PC-3 (cell line): ENCODE measurements at regions of chr2 and their contacts with region 1.

Region 1: GRCh38 chr2:97663965-97664635 is at the start of gene ACTR1B:
- DNase-seq: peak; percentile 98
- ATAC-seq: peak; percentile 82
- H3K4me3 ChIP-seq: peak within 1 kb of the TSS; percentile 83
- H3K27ac ChIP-seq: peak within 1 kb of the TSS; percentile 77
- H3K4me1 ChIP-seq: peaks cover 24% of the 10 kb centered on the region
- H3K27me3 ChIP-seq: no peaks in the 10 kb centered on the region
- CTCF ChIP-seq: peak; percentile 71
- total RNA-seq, gene ACTR1B: 27.0 and 31.1 TPM in 2 replicates

Region 2: DNA sequence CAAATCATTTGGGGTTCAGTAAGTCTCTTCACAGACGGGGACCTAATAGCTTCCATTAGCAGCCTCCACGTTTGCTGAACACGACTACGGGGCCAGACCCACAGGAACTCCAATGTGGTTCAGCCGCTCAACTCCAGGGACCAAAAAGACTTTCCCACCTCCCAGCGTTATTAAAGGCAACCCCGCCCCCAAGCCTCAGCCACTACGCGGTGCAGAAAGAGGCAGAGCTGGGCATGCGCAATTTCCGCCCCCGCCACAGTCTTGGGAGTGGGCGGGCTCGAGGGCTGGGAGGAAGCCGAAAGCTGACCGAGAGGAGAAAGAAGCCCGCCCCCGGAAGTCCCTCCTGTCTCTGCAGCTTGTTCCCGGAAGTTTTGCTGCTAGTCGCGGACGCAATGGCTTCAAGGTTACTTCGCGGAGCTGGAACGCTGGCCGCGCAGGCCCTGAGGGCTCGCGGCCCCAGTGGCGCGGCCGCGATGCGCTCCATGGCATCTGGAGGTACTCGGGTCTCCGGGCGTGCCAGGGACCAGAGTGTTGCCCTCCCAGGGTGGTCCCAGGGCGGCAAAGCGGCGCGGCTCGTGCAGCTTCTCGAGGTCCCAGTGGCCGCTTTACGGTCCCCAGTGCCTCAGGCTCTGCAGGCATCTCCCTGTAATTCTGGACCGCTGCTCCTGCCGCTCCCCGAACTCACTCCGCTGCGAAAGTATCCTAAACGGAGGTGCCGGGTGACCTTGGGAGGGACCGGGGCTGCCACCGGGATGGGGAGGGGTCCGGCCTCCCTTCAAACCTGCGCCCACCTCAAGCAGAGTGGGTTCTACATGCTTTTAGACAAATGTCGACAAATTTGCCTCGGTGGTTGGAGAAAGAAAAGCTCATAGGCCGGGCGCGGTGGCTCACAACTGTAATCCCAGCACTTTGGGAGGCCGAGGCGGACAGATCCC is 18.1 kb before region 1 on chr2 and contains the start of gene COX5B:
- CTCF ChIA-PET with region 1: interaction called, 16 read pairs
- POLR2A ChIA-PET with region 1: interaction called, 12 read pairs
- intact Hi-C with region 1: loop called (anchors 1 kb)
- DNase-seq: peak; percentile 98
- ATAC-seq: peak; percentile 96
- H3K4me3 ChIP-seq: peak within 1 kb of the TSS; percentile 83
- H3K27ac ChIP-seq: peak within 1 kb of the TSS; percentile 9
- H3K4me1 ChIP-seq: peaks cover 11% of the 10 kb centered on the region
- H3K27me3 ChIP-seq: no peaks in the 10 kb centered on the region
- CTCF ChIP-seq: no peak
- total RNA-seq, gene COX5B: 803 and 1,015 TPM in 2 replicates

Region 3: DNA sequence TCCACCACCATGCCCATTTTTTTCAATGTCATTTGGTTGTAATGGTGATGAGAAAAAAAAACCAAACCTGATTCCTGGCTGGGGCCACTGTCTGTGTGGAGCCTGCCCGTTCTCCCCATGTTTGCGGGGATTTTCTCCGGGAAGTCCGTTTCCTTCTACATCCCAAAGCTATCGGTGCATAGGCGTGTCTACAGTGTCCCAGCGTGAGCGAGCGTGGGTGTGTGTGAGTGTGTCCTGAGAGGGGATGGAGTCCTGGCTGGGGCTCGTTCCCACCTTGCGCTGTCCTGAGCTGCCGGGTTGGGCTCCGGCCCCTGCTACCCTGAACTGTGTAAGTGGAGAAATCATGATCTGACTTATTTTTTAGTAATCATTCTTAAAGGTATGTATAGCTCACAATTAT is 42.0 kb after region 1 on chr2:
- CTCF ChIA-PET with region 1: interaction called, 3 read pairs
- POLR2A ChIA-PET with region 1: interaction called, 11 read pairs
- intact Hi-C with region 1: no loop called
- DNase-seq: no peak
- ATAC-seq: no peak
- H3K4me3 ChIP-seq: no peak overlapping the region
- H3K27ac ChIP-seq: no peak overlapping the region
- H3K4me1 ChIP-seq: no peaks in the 10 kb centered on the region
- H3K27me3 ChIP-seq: no peaks in the 10 kb centered on the region
- CTCF ChIP-seq: no peak

Region 4: DNA sequence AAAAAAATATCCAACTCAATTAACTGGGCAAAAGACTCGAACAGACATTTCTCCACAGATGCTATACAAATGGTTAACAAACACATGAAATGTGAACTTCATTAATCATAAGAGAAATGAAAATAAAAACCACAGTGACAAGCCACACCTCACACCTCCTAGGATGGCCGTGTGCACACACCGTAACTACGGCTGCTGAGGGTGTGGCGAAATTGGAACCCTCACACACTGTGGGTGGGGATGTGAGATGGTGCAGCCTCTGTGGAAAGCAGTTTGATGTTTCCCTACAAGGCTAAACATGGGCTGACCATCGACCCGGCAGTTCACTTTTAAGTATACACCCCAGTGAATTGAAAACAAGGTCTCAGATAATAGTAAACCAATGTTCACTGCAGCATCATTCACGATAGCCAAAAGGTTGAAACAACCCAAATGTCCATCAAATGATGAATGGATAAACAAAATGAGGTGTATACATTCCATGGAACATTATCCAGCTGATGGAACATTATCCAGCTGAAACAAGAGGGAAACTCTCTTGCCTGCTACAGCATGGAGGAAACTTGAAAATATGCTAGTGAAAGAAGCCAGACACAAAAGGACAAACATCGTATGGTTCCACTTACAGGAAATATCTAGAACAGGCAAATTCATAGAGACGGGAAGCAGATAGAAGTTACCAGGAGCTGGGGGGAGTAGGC is 81.5 kb after region 1 on chr2:
- CTCF ChIA-PET with region 1: no interaction called
- POLR2A ChIA-PET with region 1: no interaction called
- intact Hi-C with region 1: no loop called
- DNase-seq: no peak
- ATAC-seq: no peak
- H3K4me3 ChIP-seq: no peak overlapping the region
- H3K27ac ChIP-seq: no peak overlapping the region
- H3K4me1 ChIP-seq: peaks cover 11% of the 10 kb centered on the region
- H3K27me3 ChIP-seq: no peaks in the 10 kb centered on the region
- CTCF ChIP-seq: no peak